Activated B cell treated with CpG ODN at 0.5 μM for 24 hours (primary cell): ENCODE measurements at regions of chr12 and their contacts with region 1.

Region 1: GRCh38 chr12:101773650-101774162 is 34.4 kb upstream of the SYCP3 start:
- DNase-seq: peak; percentile 27
- ATAC-seq: peak; percentile 92
- H3K4me3 Mint-ChIP-seq: no peak overlapping the region
- H3K27ac Mint-ChIP-seq: no peak overlapping the region
- H3K4me1 Mint-ChIP-seq: peaks cover 2% of the 10 kb centered on the region
- H3K27me3 Mint-ChIP-seq: no peaks in the 10 kb centered on the region
- CTCF ChIP-seq: peak; percentile 95

Region 2: GRCh38 chr12:101230547-101230946 is 543.2 kb before region 1 on chr12:
- CTCF ChIA-PET with region 1: no interaction called
- POLR2A ChIA-PET with region 1: no interaction called
- intact Hi-C with region 1: no loop called
- DNase-seq: no peak
- ATAC-seq: no peak
- H3K4me3 Mint-ChIP-seq: no peak overlapping the region
- H3K27ac Mint-ChIP-seq: no peak overlapping the region
- H3K4me1 Mint-ChIP-seq: no peaks in the 10 kb centered on the region
- H3K27me3 Mint-ChIP-seq: peaks cover 3% of the 10 kb centered on the region
- CTCF ChIP-seq: no peak

Region 3: GRCh38 chr12:101414533-101415119 is 359.1 kb before region 1 on chr12:
- CTCF ChIA-PET with region 1: interaction called, 19 read pairs
- POLR2A ChIA-PET with region 1: no interaction called
- intact Hi-C with region 1: loop called (anchors 1 kb)
- DNase-seq: no peak
- ATAC-seq: no peak
- H3K4me3 Mint-ChIP-seq: no peak overlapping the region
- H3K27ac Mint-ChIP-seq: no peak overlapping the region
- H3K4me1 Mint-ChIP-seq: no peaks in the 10 kb centered on the region
- H3K27me3 Mint-ChIP-seq: no peaks in the 10 kb centered on the region
- CTCF ChIP-seq: peak; percentile 24

Region 4: DNA sequence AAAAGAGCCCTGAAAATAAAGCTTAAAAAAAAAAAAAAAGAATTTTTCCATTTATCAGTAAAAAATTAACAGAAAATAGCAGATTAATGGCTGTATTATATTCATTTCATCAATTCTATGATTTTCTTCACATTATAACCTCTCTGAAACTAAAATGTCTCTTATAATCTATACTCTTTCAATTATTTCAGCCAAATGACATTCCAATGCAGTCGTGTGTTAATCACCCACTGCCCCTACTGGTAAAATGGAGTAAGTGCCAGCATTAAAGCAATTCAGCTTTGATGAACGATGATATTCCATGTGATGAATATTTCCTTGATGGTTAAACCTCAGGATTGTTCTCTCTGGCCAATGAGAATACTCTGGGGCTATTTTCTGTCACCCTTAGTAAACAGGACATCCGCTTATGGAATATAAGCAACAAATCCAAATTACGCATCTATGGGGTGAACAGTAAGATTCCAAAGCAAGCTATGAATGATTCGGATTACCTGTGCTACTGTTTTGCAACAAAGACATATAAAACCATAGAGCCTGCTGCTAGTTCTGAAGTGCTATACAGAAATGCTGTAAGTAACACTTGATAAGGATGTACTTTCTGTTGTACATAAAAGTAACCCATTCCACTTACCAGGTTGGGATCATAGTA is 14.2 kb before region 1 on chr12:
- CTCF ChIA-PET with region 1: interaction called, 19 read pairs
- POLR2A ChIA-PET with region 1: no interaction called
- intact Hi-C with region 1: no loop called
- DNase-seq: no peak
- ATAC-seq: peak; percentile 79
- H3K4me3 Mint-ChIP-seq: no peak overlapping the region
- H3K27ac Mint-ChIP-seq: no peak overlapping the region
- H3K4me1 Mint-ChIP-seq: peaks cover 18% of the 10 kb centered on the region
- H3K27me3 Mint-ChIP-seq: no peaks in the 10 kb centered on the region
- CTCF ChIP-seq: peak; percentile 50

Region 5: GRCh38 chr12:102010265-102010994 is 236.7 kb after region 1 on chr12:
- CTCF ChIA-PET with region 1: no interaction called
- POLR2A ChIA-PET with region 1: no interaction called
- intact Hi-C with region 1: loop called (anchors 5 kb)
- DNase-seq: peak; percentile 23
- ATAC-seq: peak; percentile 96
- H3K4me3 Mint-ChIP-seq: peak overlapping the region; percentile 63
- H3K27ac Mint-ChIP-seq: peak overlapping the region; percentile 96
- H3K4me1 Mint-ChIP-seq: peaks cover 33% of the 10 kb centered on the region
- H3K27me3 Mint-ChIP-seq: no peaks in the 10 kb centered on the region
- CTCF ChIP-seq: no peak

Region 6: DNA sequence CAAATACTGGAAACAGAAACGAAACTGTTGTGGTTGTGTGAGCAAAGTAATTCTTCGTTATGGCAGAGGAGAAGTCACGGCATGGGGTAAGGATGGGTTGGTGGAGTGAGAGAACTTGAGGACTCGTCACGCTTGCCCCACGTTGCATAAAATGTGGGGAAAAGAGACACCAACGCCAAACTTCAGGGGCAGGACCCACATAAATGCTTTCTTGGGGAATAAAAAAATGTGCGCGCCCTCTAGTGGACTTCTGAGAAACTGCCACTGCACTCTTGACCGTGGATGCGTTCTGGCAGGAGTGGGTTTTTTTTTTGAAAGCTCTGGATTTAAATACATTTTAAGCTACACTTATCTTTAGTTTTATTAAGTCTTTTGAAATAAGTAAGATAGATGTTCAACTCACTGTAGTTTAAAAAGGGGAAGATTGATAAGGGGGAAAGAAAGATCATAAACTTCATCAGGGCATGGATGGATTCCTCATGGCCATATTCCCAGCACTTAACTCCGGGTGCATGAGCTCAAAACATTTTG is 710.8 kb after region 1 on chr12:
- CTCF ChIA-PET with region 1: interaction called, 3 read pairs
- POLR2A ChIA-PET with region 1: no interaction called
- intact Hi-C with region 1: loop called (anchors 2 kb)
- DNase-seq: peak; percentile 23
- ATAC-seq: peak; percentile 78
- H3K4me3 Mint-ChIP-seq: peak overlapping the region; percentile 70
- H3K27ac Mint-ChIP-seq: peak overlapping the region; percentile 87
- H3K4me1 Mint-ChIP-seq: peaks cover 23% of the 10 kb centered on the region
- H3K27me3 Mint-ChIP-seq: no peaks in the 10 kb centered on the region
- CTCF ChIP-seq: peak; percentile 87

Region 7: GRCh38 chr12:102702447-102703114 is 928.9 kb after region 1 on chr12:
- CTCF ChIA-PET with region 1: interaction called, 4 read pairs
- POLR2A ChIA-PET with region 1: no interaction called
- intact Hi-C with region 1: loop called (anchors 1 kb)
- DNase-seq: no peak
- ATAC-seq: peak; percentile 45
- H3K4me3 Mint-ChIP-seq: no peak overlapping the region
- H3K27ac Mint-ChIP-seq: no peak overlapping the region
- H3K4me1 Mint-ChIP-seq: no peaks in the 10 kb centered on the region
- H3K27me3 Mint-ChIP-seq: peaks cover 11% of the 10 kb centered on the region
- CTCF ChIP-seq: no peak

Region 8: GRCh38 chr12:102811110-102811737 is 1037.5 kb after region 1 on chr12:
- CTCF ChIA-PET with region 1: no interaction called
- POLR2A ChIA-PET with region 1: no interaction called
- intact Hi-C with region 1: loop called (anchors 2 kb)
- DNase-seq: no peak
- ATAC-seq: no peak
- H3K4me3 Mint-ChIP-seq: no peak overlapping the region
- H3K27ac Mint-ChIP-seq: no peak overlapping the region
- H3K4me1 Mint-ChIP-seq: no peaks in the 10 kb centered on the region
- H3K27me3 Mint-ChIP-seq: peaks cover 9% of the 10 kb centered on the region
- CTCF ChIP-seq: no peak